CD4-positive, alpha-beta T cell (primary cell): ENCODE measurements at regions of chr13 and their contacts with region 1.

Region 1: DNA sequence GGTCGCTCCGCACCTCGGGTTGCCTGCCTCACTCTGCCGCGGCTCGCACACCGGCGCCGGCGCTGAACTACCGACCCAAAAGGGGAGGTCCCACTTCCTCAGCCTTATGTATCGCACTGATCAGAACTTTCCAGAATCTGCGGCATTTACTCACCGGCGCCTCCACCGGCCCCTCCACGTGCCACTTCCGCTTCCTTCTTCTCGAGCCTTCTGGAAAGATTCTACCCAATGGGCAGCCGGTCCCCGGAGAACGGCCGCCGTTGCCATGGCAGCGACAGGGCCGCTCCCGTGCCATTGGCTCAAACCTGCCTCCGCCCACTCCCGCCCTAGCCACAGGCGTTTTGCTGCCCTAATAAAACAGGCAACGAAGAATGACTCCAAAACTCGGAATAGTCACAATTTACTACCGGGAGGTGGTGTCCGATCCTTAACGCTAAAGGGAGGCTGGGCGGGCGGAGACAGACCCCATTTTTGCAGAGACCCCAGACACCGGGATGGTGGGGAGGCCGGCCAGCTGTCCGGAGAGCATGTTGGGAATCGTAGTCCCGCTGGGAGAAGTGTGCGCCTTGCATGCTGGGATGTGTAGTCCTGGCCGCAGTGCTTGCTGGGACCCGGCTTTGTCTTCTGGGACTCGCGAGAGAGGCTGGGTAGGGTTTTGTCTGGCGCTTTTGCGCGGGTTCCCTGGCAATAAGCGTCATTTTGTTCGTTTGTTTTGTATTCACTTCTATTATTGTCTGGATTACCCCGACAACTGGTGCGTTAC is at the start of gene HSPH1:
- DNase-seq: peak; percentile 95 to 99 (median 98)
- ATAC-seq: peak; percentile 81
- H3K4me3 ChIP-seq: peak within 1 kb of the TSS; percentile 93
- H3K4me3 Mint-ChIP-seq: peak within 1 kb of the TSS; percentile 96
- H3K27ac ChIP-seq: peak within 1 kb of the TSS; percentile 94 to 95
- H3K27ac Mint-ChIP-seq: peak within 1 kb of the TSS; percentile 98
- H3K4me1 ChIP-seq: peaks cover 17% of the 10 kb centered on the region
- H3K4me1 Mint-ChIP-seq: peaks cover 46% of the 10 kb centered on the region
- H3K27me3 ChIP-seq: no peaks in the 10 kb centered on the region
- H3K27me3 Mint-ChIP-seq: no peaks in the 10 kb centered on the region
- CTCF ChIP-seq: peak; percentile 13
- total RNA-seq, gene HSPH1: 226 to 238 TPM

Region 2: DNA sequence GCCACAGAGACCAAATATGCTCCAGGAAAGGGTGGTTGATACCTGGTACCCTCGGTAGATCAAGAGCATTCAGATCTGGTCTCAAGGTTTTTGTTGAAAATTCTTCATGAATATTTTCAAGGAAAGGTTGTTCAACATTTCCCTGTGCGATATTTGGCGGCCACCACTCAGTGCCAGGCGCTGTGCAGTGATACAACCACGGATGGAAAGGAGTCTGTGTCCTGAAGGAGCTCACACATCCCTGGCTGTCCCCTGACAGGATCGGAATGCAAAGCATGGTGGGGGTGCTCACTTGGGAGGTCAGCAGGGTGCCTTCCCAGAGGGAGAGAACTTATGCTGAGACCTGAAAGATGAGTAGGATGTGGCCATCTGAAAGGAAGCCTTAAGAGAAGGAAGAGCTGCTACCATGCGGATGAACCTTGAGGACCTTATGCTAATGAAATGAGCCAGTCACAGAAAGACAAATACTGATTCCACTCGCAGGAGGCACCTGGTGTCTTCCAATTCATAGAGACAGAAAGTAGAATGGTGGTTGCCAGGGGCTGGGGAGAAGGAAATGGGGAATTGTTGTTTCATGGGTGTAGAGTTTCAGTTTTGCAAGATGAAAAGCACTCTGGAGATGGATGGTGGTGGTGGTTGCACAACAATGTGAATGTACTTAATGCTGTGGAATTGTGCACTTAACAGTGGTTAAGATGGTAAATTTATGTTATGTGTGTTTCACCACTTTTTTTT is 41.9 kb before region 1 on chr13:
- CTCF ChIA-PET with region 1: no interaction called
- POLR2A ChIA-PET with region 1: no interaction called
- intact Hi-C with region 1: no loop called
- DNase-seq: no peak
- ATAC-seq: no peak
- H3K4me3 ChIP-seq: no peak overlapping the region
- H3K4me3 Mint-ChIP-seq: no peak overlapping the region
- H3K27ac ChIP-seq: no peak overlapping the region
- H3K27ac Mint-ChIP-seq: no peak overlapping the region
- H3K4me1 ChIP-seq: no peaks in the 10 kb centered on the region
- H3K4me1 Mint-ChIP-seq: no peaks in the 10 kb centered on the region
- H3K27me3 ChIP-seq: peaks cover 6 to 7% of the 10 kb centered on the region in 2 experiments
- H3K27me3 Mint-ChIP-seq: peaks cover 38% of the 10 kb centered on the region
- CTCF ChIP-seq: no peak

Region 3: GRCh38 chr13:31138515-31138914 is 23.5 kb before region 1 on chr13:
- CTCF ChIA-PET with region 1: no interaction called
- POLR2A ChIA-PET with region 1: no interaction called
- intact Hi-C with region 1: loop called in 1 of 2 experiments (anchors 1 kb)
- DNase-seq: no peak
- ATAC-seq: no peak
- H3K4me3 ChIP-seq: no peak overlapping the region
- H3K4me3 Mint-ChIP-seq: no peak overlapping the region
- H3K27ac ChIP-seq: no peak overlapping the region
- H3K27ac Mint-ChIP-seq: peak overlapping the region; percentile 5
- H3K4me1 ChIP-seq: no peaks in the 10 kb centered on the region
- H3K4me1 Mint-ChIP-seq: peaks cover 33% of the 10 kb centered on the region
- H3K27me3 ChIP-seq: no peaks in the 10 kb centered on the region
- H3K27me3 Mint-ChIP-seq: no peaks in the 10 kb centered on the region
- CTCF ChIP-seq: no peak

Region 4: DNA sequence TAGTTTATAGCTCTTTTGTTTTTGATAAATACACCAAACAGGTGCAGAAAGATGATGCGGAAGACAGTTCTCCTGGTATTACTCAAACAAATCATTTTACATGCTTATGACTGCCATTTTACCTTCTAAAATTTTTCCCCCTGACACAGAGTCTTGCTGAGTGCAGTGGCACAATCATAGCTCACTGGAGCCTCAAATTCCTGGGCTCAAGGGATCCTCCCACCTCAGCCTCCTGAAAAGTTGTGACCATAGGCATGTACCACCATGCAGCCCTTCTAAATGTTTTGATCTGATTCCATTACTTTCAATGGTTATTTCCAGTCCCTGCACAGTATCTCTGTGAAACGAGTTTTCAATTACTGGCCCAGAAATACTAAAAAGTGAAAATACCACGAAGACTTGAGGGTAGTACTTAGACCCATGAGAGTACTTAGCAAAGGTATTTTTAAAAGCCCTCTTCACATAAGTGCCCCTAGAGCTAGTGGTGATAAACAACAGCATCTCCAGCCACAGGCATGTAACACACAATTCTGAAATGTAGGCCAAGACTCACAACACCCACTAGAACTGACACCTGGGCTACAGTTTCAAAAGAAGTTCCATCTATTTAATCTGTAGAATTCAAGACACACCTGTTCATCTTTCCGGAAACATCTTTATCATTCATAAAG is 11.6 kb before region 1 on chr13:
- CTCF ChIA-PET with region 1: interaction called, 3 read pairs
- POLR2A ChIA-PET with region 1: interaction called, 13 read pairs
- intact Hi-C with region 1: no loop called
- DNase-seq: no peak
- ATAC-seq: no peak
- H3K4me3 ChIP-seq: no peak overlapping the region
- H3K4me3 Mint-ChIP-seq: no peak overlapping the region
- H3K27ac ChIP-seq: no peak overlapping the region
- H3K27ac Mint-ChIP-seq: no peak overlapping the region
- H3K4me1 ChIP-seq: no peaks in the 10 kb centered on the region
- H3K4me1 Mint-ChIP-seq: peaks cover 31% of the 10 kb centered on the region
- H3K27me3 ChIP-seq: no peaks in the 10 kb centered on the region
- H3K27me3 Mint-ChIP-seq: no peaks in the 10 kb centered on the region
- CTCF ChIP-seq: no peak

Region 5: GRCh38 chr13:31199849-31200636 is 38.0 kb after region 1 on chr13 and contains the start of gene B3GLCT:
- CTCF ChIA-PET with region 1: interaction called, 17 read pairs
- POLR2A ChIA-PET with region 1: interaction called, 44 read pairs
- intact Hi-C with region 1: loop called (anchors 1 kb)
- DNase-seq: peak; percentile 59 to 93 (median 78)
- ATAC-seq: peak; percentile 76
- H3K4me3 ChIP-seq: peak within 1 kb of the TSS; percentile 66
- H3K4me3 Mint-ChIP-seq: peak within 1 kb of the TSS; percentile 99
- H3K27ac ChIP-seq: peak within 1 kb of the TSS; percentile 78 to 83
- H3K27ac Mint-ChIP-seq: peak within 1 kb of the TSS; percentile 95
- H3K4me1 ChIP-seq: peaks cover 16% of the 10 kb centered on the region
- H3K4me1 Mint-ChIP-seq: peaks cover 17% of the 10 kb centered on the region
- H3K27me3 ChIP-seq: no peaks in the 10 kb centered on the region
- H3K27me3 Mint-ChIP-seq: peaks cover 3% of the 10 kb centered on the region
- CTCF ChIP-seq: peak; percentile 75
- total RNA-seq, gene B3GLCT: 3.2 to 3.7 TPM